Activated CD4-positive, alpha-beta memory T cell treated with anti-CD3 and anti-CD28 coated beads, Interleukin-2, amount 10 ng/mL, durations not matched to agents 7 days and 5 days (primary cell): ENCODE measurements at regions of chr5 and their contacts with region 1.

Region 1: GRCh38 chr5:71601222-71602041 is 14.3 kb downstream of the MCCC2 start:
- DNase-seq: peak; percentile 85
- H3K4me3 Mint-ChIP-seq: peak overlapping the region; percentile 22
- H3K27ac Mint-ChIP-seq: peak overlapping the region; percentile 98
- H3K4me1 Mint-ChIP-seq: peaks cover 33% of the 10 kb centered on the region
- H3K27me3 Mint-ChIP-seq: no peaks in the 10 kb centered on the region

Region 2: GRCh38 chr5:71586941-71587765 is 14.3 kb before region 1 on chr5 and contains the start of gene MCCC2:
- CTCF ChIA-PET with region 1: interaction called, 87 read pairs
- POLR2A ChIA-PET with region 1: interaction called, 73 read pairs
- DNase-seq: peak; percentile 98
- H3K4me3 Mint-ChIP-seq: peak within 1 kb of the TSS; percentile 98
- H3K27ac Mint-ChIP-seq: peak within 1 kb of the TSS; percentile 97
- H3K4me1 Mint-ChIP-seq: peaks cover 35% of the 10 kb centered on the region
- H3K27me3 Mint-ChIP-seq: no peaks in the 10 kb centered on the region
- total RNA-seq, gene MCCC2: 34.9 to 36.2 TPM